ENCODE measurements at regions of chr18 and their contacts with region 1.

Region 1: DNA sequence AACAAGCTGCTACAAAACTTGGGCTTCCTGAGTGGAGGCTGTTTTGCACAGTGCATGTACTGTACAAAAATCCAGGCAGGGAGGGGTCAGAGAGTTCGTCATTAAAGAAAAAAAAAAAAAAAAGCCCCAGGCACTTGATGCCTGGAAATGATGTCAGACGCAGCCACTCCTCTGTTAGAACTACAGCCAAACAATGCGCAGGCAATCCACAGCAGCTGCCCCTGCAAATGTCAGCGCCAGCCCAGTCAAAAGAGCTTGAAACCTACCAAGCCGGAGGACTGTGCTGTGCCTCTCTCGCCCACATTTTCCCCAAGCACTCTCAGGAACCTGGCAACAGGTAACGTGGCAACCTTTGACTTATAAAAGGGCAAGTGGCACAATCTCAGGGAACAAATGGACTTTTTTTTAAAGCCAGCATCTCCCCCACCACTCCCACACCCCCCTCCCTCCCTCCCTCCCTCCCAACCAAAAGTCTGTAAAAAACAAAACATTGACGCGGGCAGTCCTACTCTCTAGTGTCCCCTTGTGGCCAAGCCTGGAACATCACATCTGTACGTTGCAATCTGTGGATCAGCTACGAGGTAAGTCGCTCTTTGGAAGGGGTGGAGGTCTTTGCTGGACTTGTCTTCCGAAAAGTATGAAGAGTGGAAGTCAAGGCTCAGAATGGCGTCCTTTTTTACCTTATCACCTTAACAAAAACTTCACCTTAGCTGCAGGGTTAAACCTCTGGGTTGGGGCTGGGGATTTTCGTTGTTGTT is 144.1 kb downstream of the TGIF1 start:
- DNase-seq: peak; percentile 91
- H3K4me3 Mint-ChIP-seq: peak overlapping the region; percentile 84
- H3K27ac Mint-ChIP-seq: peak overlapping the region; percentile 99
- H3K4me1 Mint-ChIP-seq: peaks cover 58% of the 10 kb centered on the region
- H3K27me3 Mint-ChIP-seq: no peaks in the 10 kb centered on the region

Region 2: DNA sequence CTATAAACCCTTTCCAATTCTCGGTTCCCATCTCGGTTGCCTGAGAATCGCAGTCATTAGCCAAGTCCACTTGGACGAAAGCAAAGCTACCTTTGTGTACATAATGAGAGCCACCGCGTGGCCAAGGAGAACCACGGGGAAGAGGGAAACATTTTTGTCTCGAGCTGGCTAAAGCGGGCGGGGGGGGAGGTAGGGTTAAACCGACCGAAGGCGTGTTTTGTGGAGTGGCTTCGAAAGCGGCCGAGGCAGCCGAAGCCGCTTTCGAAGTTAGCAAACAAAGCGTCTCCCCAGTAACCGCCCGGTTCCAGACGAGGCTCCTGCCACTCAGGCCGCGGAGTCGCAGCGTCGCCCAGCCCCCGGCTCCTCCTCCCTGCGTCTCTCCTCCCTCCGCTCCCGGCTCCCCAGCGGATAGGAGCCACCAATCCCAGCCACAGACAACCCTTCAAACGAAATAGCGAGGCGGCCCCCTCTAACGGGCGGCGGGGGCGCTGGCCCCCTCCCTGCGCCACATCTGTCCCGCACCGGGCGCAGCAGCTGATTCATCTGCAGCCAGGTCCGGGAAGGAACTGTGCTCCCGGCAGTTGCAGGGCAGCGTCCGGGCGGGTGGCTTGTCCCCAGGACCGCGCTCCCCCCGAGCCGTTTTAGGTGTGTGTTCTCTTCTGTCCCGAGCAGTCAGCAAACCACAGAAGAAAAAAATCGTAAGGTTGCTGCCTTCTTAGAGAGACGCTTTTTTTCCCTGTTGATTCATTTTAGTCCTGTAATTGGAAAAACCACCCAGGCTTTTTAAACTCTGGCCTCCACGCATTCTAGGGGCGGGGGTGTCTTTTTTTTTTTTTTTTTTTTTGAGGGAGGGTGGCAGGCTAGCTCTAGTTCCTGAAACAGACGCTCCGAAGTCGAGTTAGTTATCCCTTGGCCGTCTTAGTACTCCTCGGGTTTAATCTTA is 145.9 kb before region 1 on chr18:
- CTCF ChIA-PET with region 1: interaction called, 18 read pairs
- POLR2A ChIA-PET with region 1: interaction called, 13 read pairs
- DNase-seq: peak; percentile 90
- H3K4me3 Mint-ChIP-seq: peak overlapping the region; percentile 89
- H3K27ac Mint-ChIP-seq: peak overlapping the region; percentile 99
- H3K4me1 Mint-ChIP-seq: peaks cover 38% of the 10 kb centered on the region
- H3K27me3 Mint-ChIP-seq: no peaks in the 10 kb centered on the region

Region 3: GRCh38 chr18:3502650-3503049 is 91.4 kb before region 1 on chr18:
- CTCF ChIA-PET with region 1: no interaction called
- POLR2A ChIA-PET with region 1: no interaction called
- DNase-seq: no peak
- H3K4me3 Mint-ChIP-seq: no peak overlapping the region
- H3K27ac Mint-ChIP-seq: no peak overlapping the region
- H3K4me1 Mint-ChIP-seq: peaks cover 14% of the 10 kb centered on the region
- H3K27me3 Mint-ChIP-seq: peaks cover 33% of the 10 kb centered on the region

Region 4: DNA sequence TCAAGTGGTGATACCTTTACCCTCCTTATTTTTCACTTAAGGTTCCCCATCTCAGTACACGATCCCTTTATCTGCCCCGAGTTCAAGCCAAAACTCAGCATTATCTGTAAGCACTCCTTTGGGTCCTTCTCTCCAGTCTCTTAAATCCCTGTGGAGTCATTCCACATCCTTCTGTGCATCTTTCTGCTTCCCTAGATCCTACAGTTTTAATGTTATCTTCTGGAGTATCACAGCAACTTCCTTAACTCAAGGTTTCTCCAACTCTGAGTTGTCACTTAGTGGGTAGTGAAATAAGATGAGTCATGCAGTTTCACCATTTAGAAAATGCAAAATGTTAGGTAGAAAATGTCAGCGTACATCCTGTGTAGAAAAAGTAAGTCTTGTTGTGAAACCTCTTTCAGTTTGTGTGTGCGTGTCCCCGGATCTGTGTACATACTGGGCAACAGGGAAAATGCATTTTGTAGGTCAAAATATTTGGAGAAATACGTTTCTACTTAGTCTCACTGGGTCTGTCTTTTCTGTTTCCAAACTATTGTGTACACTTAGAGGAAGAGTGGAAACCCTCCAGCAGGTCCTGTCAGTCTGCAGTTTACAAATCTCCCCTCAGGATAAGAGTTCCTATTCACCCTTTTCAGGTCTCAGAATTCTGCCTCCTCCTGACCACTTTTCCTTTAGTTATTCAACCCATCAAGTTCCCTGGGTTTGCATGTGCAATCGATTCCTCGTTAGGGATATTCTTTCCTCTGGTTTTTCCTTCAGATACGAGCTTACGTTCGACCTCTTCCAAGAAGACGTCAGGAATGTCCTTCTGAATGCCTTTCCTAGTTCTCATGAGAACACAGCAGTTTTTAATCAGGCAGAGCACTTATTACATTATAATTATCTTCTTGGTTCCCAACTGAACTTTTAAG is 10.7 kb after region 1 on chr18:
- CTCF ChIA-PET with region 1: interaction called, 24 read pairs
- POLR2A ChIA-PET with region 1: interaction called, 3 read pairs
- DNase-seq: peak; percentile 50
- H3K4me3 Mint-ChIP-seq: no peak overlapping the region
- H3K27ac Mint-ChIP-seq: no peak overlapping the region
- H3K4me1 Mint-ChIP-seq: peaks cover 30% of the 10 kb centered on the region
- H3K27me3 Mint-ChIP-seq: no peaks in the 10 kb centered on the region

Measured in activated CD4-positive, alpha-beta T cell treated with anti-CD3 and anti-CD28 coated beads, Interleukin-2, amount 10 ng/mL, durations not matched to agents 7 days and 5 days (primary cell).